Activated naive CD4-positive, alpha-beta T cell treated with anti-CD3 and anti-CD28 coated beads for 36 hours (primary cell): ENCODE measurements at regions of chr7 and their contacts with region 1.

Region 1: GRCh38 chr7:151851145-151851751 is 25.7 kb downstream of the PRKAG2 start:
- DNase-seq: peak; percentile 62
- H3K4me3 Mint-ChIP-seq: peak overlapping the region; percentile 56
- H3K27ac Mint-ChIP-seq: peak overlapping the region; percentile 62
- H3K4me1 Mint-ChIP-seq: peaks cover 26% of the 10 kb centered on the region
- H3K27me3 Mint-ChIP-seq: no peaks in the 10 kb centered on the region

Region 2: GRCh38 chr7:151558575-151558974 is 292.7 kb before region 1 on chr7:
- CTCF ChIA-PET with region 1: no interaction called
- intact Hi-C with region 1: no loop called
- DNase-seq: no peak
- H3K4me3 Mint-ChIP-seq: no peak overlapping the region
- H3K27ac Mint-ChIP-seq: peak overlapping the region; percentile 50
- H3K4me1 Mint-ChIP-seq: peaks cover 14% of the 10 kb centered on the region
- H3K27me3 Mint-ChIP-seq: no peaks in the 10 kb centered on the region

Region 3: DNA sequence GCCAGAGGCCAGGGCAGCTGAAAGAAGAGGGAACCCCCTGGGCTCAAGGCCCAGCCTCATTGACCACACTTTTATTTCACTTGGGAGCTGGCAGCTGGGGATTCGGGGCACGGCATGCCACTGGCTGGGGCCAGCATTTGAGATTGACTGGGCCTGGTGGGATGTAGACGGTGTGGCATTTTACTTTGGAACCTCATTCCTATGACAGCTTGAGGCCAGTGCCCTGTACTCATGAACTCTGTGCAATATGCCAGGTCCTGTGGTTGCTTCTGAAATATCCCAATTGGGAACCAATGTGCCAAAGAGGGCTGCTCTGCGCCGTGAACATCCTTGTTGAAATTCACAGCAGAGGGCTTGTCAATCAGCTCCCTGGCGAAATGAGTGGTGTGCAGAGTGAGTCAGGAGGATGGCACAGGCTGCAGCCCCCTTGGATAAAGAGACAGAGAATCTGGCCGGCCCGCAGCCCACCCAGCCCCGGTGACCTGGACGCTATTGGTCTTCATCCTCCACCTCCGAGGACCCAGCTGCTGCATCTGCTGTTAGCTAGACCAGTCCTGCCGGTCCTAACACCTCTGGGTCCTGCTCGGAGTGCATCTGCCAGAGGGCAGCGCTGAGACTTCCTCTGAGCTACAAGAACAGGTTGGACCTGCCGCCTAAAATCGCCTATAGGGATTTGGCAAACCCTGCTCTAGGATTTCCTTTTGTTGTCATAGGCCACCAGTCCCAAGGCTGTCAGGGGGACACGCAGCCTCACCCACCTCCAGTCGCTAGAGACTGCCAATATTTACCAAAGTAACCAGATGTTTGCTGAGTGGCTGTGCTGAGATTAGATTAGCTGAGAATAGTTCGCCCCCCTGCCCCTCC is 32.3 kb before region 1 on chr7:
- CTCF ChIA-PET with region 1: no interaction called
- intact Hi-C with region 1: no loop called
- DNase-seq: no peak
- H3K4me3 Mint-ChIP-seq: no peak overlapping the region
- H3K27ac Mint-ChIP-seq: no peak overlapping the region
- H3K4me1 Mint-ChIP-seq: peaks cover 11% of the 10 kb centered on the region
- H3K27me3 Mint-ChIP-seq: no peaks in the 10 kb centered on the region

Region 4: GRCh38 chr7:151838861-151839391 is 12.3 kb before region 1 on chr7:
- CTCF ChIA-PET with region 1: interaction called, 13 read pairs
- intact Hi-C with region 1: no loop called
- DNase-seq: peak; percentile 53
- H3K4me3 Mint-ChIP-seq: peak overlapping the region; percentile 32
- H3K27ac Mint-ChIP-seq: no peak overlapping the region
- H3K4me1 Mint-ChIP-seq: peaks cover 26% of the 10 kb centered on the region
- H3K27me3 Mint-ChIP-seq: no peaks in the 10 kb centered on the region

Region 5: DNA sequence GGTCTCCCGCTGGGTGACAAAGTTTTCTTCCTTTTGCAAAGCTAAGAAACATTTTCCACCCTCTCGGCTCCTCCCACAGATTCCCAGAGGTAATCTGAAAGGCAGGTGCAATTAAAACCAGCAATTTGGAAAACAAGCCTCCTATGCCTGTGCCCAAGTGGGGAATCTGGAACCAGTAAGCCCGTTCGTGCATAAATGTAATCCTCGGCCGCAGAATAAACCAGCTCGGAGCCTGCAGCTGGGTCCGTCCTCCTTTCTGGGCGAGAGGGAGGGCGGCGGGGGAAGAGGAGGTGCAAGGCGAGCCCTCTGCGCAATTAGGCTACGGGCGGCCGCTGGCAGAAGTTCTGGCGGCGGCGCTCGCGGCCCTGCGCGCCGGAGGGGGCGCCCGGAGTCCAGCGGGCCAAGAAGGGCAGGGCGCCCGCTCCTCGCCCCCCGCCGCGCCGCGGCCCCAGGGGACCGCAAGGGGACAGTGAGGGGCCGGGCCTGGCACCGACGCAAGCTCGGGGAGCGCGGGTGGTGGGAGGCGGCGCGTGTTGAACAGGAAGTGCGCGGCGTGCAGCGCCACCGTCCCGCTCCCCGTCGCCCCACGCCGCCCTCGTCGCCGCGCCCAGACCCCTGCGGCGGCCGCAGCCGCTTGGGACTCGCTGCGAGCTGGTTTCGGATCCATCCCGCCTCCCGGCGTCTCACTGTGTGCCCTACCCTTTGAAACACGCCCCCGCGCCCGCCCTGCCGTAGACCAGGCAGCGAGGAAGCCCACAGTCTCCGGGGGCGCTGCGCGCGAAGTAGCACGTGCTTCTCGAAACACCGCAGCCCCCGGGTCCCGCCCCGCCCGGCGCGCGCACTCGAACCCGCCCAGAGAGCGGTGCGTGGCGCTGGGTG is 25.9 kb after region 1 on chr7 and contains the start of gene PRKAG2:
- CTCF ChIA-PET with region 1: interaction called, 3 read pairs
- intact Hi-C with region 1: loop called (anchors 1 kb)
- DNase-seq: peak; percentile 63
- H3K4me3 Mint-ChIP-seq: peak within 1 kb of the TSS; percentile 96
- H3K27ac Mint-ChIP-seq: peak within 1 kb of the TSS; percentile 81
- H3K4me1 Mint-ChIP-seq: peaks cover 10% of the 10 kb centered on the region
- H3K27me3 Mint-ChIP-seq: no peaks in the 10 kb centered on the region
- total RNA-seq, gene PRKAG2: 16.9 to 18.7 TPM